Vagina (tissue), 2 donors: ENCODE measurements at regions of chr11 and their contacts with region 1.

Region 1: GRCh38 chr11:113106507-113106906 is 145.3 kb downstream of the NCAM1 start:
- DNase-seq: no peak
- H3K4me3 ChIP-seq: no peak overlapping the region
- H3K27ac ChIP-seq: no peak overlapping the region
- H3K4me1 ChIP-seq: no peaks in the 10 kb centered on the region
- H3K27me3 ChIP-seq: no peaks in the 10 kb centered on the region
- CTCF ChIP-seq: no peak
- POLR2A ChIP-seq: no peak

Region 2: GRCh38 chr11:113065330-113065729 is 41.2 kb before region 1 on chr11:
- intact Hi-C with region 1: loop called (anchors 2 kb)
- DNase-seq: no peak
- H3K4me3 ChIP-seq: no peak overlapping the region
- H3K27ac ChIP-seq: no peak overlapping the region
- H3K4me1 ChIP-seq: no peaks in the 10 kb centered on the region
- H3K27me3 ChIP-seq: no peaks in the 10 kb centered on the region
- CTCF ChIP-seq: no peak
- POLR2A ChIP-seq: no peak